Prostate gland (tissue), 2 donors: ENCODE measurements at regions of chr6 and their contacts with region 1.

Region 1: DNA sequence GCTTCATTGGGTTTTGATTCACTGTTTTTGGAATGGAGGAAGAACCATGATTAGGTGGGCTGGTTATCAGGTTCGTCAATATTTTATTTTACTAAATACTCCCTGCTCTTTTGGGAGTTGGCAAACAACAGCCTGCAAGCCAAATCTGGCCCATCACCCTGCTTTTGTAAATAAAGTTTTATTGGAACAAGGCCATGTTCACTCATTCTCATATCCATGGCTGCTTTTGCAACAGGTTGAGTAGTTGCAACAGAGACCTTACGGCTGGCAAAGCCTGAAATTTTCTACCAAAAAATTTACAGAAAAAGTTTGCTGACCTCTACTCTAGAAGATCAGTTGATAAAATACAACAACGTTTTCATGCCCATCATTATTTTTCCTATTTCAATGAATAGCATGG is 45.1 kb downstream of the SYTL3 start:
- DNase-seq: no peak
- H3K4me3 ChIP-seq: no peak overlapping the region
- H3K27ac ChIP-seq: no peak overlapping the region
- H3K4me1 ChIP-seq: no peaks in the 10 kb centered on the region
- H3K27me3 ChIP-seq: no peaks in the 10 kb centered on the region
- CTCF ChIP-seq: no peak
- POLR2A ChIP-seq: no peak

Region 2: DNA sequence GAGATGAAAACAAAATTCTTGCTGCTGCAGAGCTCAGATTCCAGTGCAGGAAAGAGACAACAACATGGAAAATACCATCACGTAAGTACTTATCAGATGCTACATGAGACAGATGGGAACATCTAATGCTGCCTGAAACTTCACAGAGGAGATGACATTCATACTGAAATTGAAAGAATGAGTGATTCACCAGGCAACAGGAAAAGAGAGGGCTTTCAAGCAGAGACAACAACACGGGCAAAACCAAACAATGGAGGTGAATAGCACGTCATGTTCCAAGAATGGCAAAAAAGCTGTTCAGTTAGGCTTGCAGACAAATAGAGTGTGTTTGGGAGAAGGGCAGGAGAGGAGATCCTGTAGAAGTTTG is 487.5 kb before region 1 on chr6:
- intact Hi-C with region 1: loop called (anchors 5 kb)
- DNase-seq: no peak
- H3K4me3 ChIP-seq: no peak overlapping the region
- H3K27ac ChIP-seq: no peak overlapping the region
- H3K4me1 ChIP-seq: no peaks in the 10 kb centered on the region
- H3K27me3 ChIP-seq: no peaks in the 10 kb centered on the region
- CTCF ChIP-seq: no peak
- POLR2A ChIP-seq: no peak

Region 3: DNA sequence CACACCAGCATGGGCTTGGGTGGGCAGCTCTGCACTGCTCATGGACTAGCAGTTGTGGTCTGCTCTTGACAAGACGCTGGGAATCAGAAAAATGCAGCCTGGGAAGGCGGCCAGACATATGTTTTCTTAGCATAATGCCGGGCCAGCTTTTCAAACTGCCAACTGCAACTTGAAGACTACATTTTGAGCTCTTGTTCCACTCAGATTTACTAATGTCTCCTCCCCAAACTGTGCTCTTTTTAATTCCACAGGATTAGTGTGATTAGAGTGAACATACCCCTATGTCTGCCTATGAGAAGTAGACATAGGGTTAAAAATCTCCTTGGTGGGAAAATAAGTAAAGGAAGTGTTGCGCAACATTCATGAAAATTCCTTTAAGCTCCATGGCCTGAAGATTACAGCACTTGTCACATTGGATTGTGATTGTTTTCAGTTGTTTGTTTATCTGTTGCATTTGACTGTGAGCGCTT is 469.0 kb after region 1 on chr6:
- intact Hi-C with region 1: no loop called
- DNase-seq: no peak
- H3K4me3 ChIP-seq: no peak overlapping the region
- H3K27ac ChIP-seq: no peak overlapping the region
- H3K4me1 ChIP-seq: no peaks in the 10 kb centered on the region
- H3K27me3 ChIP-seq: peaks cover 7% of the 10 kb centered on the region
- CTCF ChIP-seq: no peak
- POLR2A ChIP-seq: no peak